Activated T-helper 1 cell treated with anti-CD3 and anti-CD28 coated beads, Interleukin-12 subunit alpha, Interleukin-12 subunit beta, Interleukin-2, Interleukin-4 antibody, amounts not matched to agents 30 ng/mL and 10 ng/mL and 1 ng/mL, durations not matched to agents 14 hours and 24 hours and 36 hours (primary cell): ENCODE measurements at regions of chrX and their contacts with region 1.

Region 1: DNA sequence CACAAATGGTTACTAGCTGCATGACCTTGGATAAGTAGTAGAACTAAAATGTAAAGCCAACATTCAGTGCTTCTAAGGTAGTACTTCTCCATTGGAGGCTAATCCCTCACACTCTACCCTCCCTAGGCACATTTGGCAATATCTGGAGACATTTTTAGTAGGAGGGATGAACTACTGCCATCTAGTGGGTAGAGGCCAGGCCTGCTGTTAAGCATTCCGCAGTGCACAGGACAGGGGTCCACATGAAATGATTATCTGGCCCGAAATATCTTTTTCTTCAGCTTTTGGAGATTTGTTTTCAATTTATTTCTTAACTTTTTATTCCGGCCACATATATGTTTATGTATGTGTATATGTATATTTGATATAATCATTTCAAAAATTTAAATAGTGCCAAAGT is 36.0 kb upstream of the SPANXC start:
- DNase-seq: no peak
- H3K4me3 Mint-ChIP-seq: no peak overlapping the region
- H3K27ac Mint-ChIP-seq: no peak overlapping the region
- H3K4me1 Mint-ChIP-seq: no peaks in the 10 kb centered on the region
- H3K27me3 Mint-ChIP-seq: no peaks in the 10 kb centered on the region

Region 2: GRCh38 chrX:140817942-140818341 is 460.4 kb before region 1 on chrX:
- intact Hi-C with region 1: loop called (anchors 5 kb)
- DNase-seq: no peak
- H3K4me3 Mint-ChIP-seq: no peak overlapping the region
- H3K27ac Mint-ChIP-seq: no peak overlapping the region
- H3K4me1 Mint-ChIP-seq: peaks cover 8% of the 10 kb centered on the region
- H3K27me3 Mint-ChIP-seq: no peaks in the 10 kb centered on the region

Region 3: DNA sequence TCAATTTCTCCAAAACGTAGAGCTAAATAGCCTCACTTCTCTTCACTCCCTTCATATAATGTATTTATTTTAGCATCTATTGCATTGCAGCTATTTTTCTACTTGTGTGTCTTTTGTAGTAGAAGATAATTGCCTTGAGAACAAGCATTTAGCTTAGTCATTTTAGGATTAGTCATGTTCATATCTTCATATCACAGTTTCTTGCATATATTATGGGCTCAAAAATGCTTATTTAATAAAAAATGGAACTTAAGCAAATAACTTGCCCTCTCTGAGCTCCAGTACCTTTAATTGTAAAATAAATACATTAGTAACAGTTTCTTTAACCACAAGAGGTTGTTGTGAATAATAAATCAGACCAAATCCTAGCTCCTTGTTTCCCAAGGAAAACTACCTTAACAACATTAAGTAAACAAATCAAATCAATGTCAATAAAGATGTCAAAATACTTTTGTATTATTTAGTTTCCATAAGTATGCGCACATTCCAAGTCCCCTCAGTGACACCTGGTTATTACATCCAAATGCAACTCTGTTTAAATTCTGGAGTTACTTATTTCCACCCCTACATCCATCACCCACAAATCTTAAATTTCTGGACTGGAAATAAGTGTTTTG is 36.3 kb after region 1 on chrX:
- intact Hi-C with region 1: no loop called
- DNase-seq: no peak
- H3K4me3 Mint-ChIP-seq: no peak overlapping the region
- H3K27ac Mint-ChIP-seq: no peak overlapping the region
- H3K4me1 Mint-ChIP-seq: no peaks in the 10 kb centered on the region
- H3K27me3 Mint-ChIP-seq: no peaks in the 10 kb centered on the region

Region 4: GRCh38 chrX:141652315-141652714 is 374.0 kb after region 1 on chrX:
- intact Hi-C with region 1: no loop called
- DNase-seq: no peak
- H3K4me3 Mint-ChIP-seq: no peak overlapping the region
- H3K27ac Mint-ChIP-seq: no peak overlapping the region
- H3K4me1 Mint-ChIP-seq: no peaks in the 10 kb centered on the region
- H3K27me3 Mint-ChIP-seq: no peaks in the 10 kb centered on the region